CD4-positive, alpha-beta T cell (primary cell): ENCODE measurements at regions of chr17 and their contacts with region 1.

Region 1: GRCh38 chr17:7444682-7445618 is at the start of gene CHRNB1:
- DNase-seq: peak in 3 of 14 experiments; percentile 15 to 56 (median 43)
- ATAC-seq: peak; percentile 11
- H3K4me3 ChIP-seq: peak within 1 kb of the TSS; percentile 37
- H3K4me3 Mint-ChIP-seq: peak within 1 kb of the TSS; percentile 59
- H3K27ac ChIP-seq: no peak within 1 kb of the TSS
- H3K27ac Mint-ChIP-seq: no peak within 1 kb of the TSS
- H3K4me1 ChIP-seq: peaks cover 37% of the 10 kb centered on the region
- H3K4me1 Mint-ChIP-seq: peaks cover 29% of the 10 kb centered on the region
- H3K27me3 ChIP-seq: peaks cover 67 to 73% of the 10 kb centered on the region in 2 experiments
- H3K27me3 Mint-ChIP-seq: peaks cover 72% of the 10 kb centered on the region
- CTCF ChIP-seq: no peak
- total RNA-seq, gene CHRNB1: 1.6 to 2.2 TPM

Region 2: GRCh38 chr17:7306911-7307686 is 137.9 kb before region 1 on chr17 and contains the start of gene EIF5A:
- CTCF ChIA-PET with region 1: no interaction called
- POLR2A ChIA-PET with region 1: no interaction called
- intact Hi-C with region 1: no loop called
- DNase-seq: peak; percentile 100
- ATAC-seq: peak; percentile 68
- H3K4me3 ChIP-seq: peak within 1 kb of the TSS; percentile 76
- H3K4me3 Mint-ChIP-seq: peak within 1 kb of the TSS; percentile 92
- H3K27ac ChIP-seq: peak within 1 kb of the TSS; percentile 97 to 99
- H3K27ac Mint-ChIP-seq: peak within 1 kb of the TSS; percentile 98
- H3K4me1 ChIP-seq: peaks cover 39% of the 10 kb centered on the region
- H3K4me1 Mint-ChIP-seq: peaks cover 44% of the 10 kb centered on the region
- H3K27me3 ChIP-seq: no peaks in the 10 kb centered on the region
- H3K27me3 Mint-ChIP-seq: no peaks in the 10 kb centered on the region
- CTCF ChIP-seq: no peak
- total RNA-seq, gene EIF5A: 471 to 480 TPM

Region 3: GRCh38 chr17:7454980-7455379 is 10.0 kb after region 1 on chr17:
- CTCF ChIA-PET with region 1: no interaction called
- POLR2A ChIA-PET with region 1: interaction called, 24 read pairs
- intact Hi-C with region 1: no loop called
- DNase-seq: no peak
- ATAC-seq: no peak
- H3K4me3 ChIP-seq: peak overlapping the region; percentile 94
- H3K4me3 Mint-ChIP-seq: peak overlapping the region; percentile 94
- H3K27ac ChIP-seq: peak overlapping the region in 1 of 2 donors; percentile 52
- H3K27ac Mint-ChIP-seq: peak overlapping the region; percentile 85
- H3K4me1 ChIP-seq: peaks cover 23% of the 10 kb centered on the region
- H3K4me1 Mint-ChIP-seq: peaks cover 39% of the 10 kb centered on the region
- H3K27me3 ChIP-seq: no peaks in the 10 kb centered on the region
- H3K27me3 Mint-ChIP-seq: no peaks in the 10 kb centered on the region
- CTCF ChIP-seq: no peak